ENCODE measurements at regions of chr16 and their contacts with region 1.

Region 1: GRCh38 chr16:82626791-82627261 is at the start of gene CDH13:
- DNase-seq: no peak
- ATAC-seq: no peak
- H3K4me3 ChIP-seq: no peak within 1 kb of the TSS
- H3K27ac ChIP-seq: no peak within 1 kb of the TSS
- H3K4me1 ChIP-seq: no peaks in the 10 kb centered on the region
- H3K27me3 ChIP-seq: peaks cover 3 to 9% of the 10 kb centered on the region in 2 experiments; a peak in 2 of 5 replicates
- CTCF ChIP-seq: no peak
- EP300 ChIP-seq: no peak
- POLR2A ChIP-seq: no peak
- RAD21 ChIP-seq: no peak
- polyA plus RNA-seq, gene CDH13: 0.03 TPM in 1 of 2 experiments, not detected in the other

Region 2: DNA sequence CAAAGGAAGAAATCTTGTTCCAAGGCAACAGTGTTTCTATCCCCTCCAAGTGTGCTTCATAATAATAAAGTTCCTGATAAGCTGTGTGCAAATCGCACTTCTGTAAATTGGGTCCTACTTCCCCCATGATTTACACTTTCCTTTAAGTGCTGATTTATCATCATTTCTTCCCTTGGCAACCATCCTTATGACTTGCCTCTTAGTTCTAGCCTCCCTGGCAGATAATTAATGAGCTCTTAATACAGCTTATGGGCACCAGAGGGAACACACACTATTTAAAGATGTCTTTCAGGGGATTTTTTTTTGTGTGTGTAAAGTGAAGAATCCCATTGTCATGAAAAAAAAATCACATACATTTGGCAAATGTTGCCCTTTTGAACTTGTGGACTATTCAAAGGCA is 355.2 kb before region 1 on chr16:
- CTCF ChIA-PET with region 1: no interaction called
- POLR2A ChIA-PET with region 1: no interaction called
- in situ Hi-C with region 1: loop called (anchors 10 kb)
- intact Hi-C with region 1: no loop called
- DNase-seq: no peak
- ATAC-seq: no peak
- H3K4me3 ChIP-seq: no peak overlapping the region
- H3K27ac ChIP-seq: no peak overlapping the region
- H3K4me1 ChIP-seq: no peaks in the 10 kb centered on the region
- H3K27me3 ChIP-seq: no peaks in the 10 kb centered on the region
- CTCF ChIP-seq: no peak
- EP300 ChIP-seq: no peak
- POLR2A ChIP-seq: no peak
- RAD21 ChIP-seq: no peak

Region 3: GRCh38 chr16:82580298-82580890 is 46.4 kb before region 1 on chr16:
- CTCF ChIA-PET with region 1: no interaction called
- POLR2A ChIA-PET with region 1: no interaction called
- in situ Hi-C with region 1: no loop called
- intact Hi-C with region 1: no loop called
- DNase-seq: no peak
- ATAC-seq: no peak
- H3K4me3 ChIP-seq: no peak overlapping the region
- H3K27ac ChIP-seq: no peak overlapping the region
- H3K4me1 ChIP-seq: no peaks in the 10 kb centered on the region
- H3K27me3 ChIP-seq: no peaks in the 10 kb centered on the region
- CTCF ChIP-seq: no peak
- EP300 ChIP-seq: no peak
- POLR2A ChIP-seq: no peak
- RAD21 ChIP-seq: no peak